CD4-positive, alpha-beta memory T cell (primary cell): ENCODE measurements at regions of chr6 and their contacts with region 1.

Region 1: DNA sequence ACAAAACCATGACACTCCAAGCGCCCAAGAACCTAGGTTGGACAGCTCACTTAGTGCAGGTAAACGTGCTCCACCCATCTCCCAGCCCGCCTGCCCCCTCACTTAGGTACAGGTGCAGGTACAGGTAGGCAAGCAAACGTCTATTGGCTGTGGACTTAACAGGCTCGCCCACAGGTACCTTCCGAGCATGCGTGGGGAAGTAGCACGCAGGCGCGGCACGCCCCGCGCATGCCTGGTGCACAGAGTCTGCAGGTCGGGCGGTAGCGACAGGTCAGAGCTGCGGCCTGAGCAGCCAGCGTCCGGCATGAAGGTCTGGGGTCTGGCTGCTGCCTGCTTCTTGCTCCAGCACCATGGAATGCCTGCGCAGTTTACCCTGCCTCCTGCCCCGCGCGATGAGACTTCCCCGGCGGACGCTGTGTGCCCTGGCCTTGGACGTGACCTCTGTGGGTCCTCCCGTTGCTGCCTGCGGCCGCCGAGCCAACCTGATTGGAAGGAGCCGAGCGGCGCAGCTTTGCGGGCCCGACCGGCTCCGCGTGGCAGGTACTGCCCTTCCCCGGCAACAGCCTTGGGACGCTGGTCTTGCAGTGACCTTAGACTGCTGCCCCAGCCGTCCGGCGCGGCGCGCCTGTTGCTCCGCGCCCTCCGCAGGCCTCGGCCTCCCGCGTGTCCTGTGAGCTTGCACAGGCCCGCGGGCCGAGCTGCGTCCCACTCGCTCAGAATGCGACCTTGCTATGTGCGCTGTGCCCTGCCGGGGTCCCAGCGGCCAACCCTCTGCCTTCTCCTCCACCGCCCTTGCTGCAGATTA is at the start of gene MRS2:
- DNase-seq: peak; percentile 73 to 78 (median 76)
- H3K4me3 ChIP-seq: peak within 1 kb of the TSS; percentile 77 to 87
- H3K4me3 Mint-ChIP-seq: peak within 1 kb of the TSS; percentile 90 to 97 (median 92)
- H3K27ac ChIP-seq: peak within 1 kb of the TSS; percentile 45
- H3K27ac Mint-ChIP-seq: peak within 1 kb of the TSS in 6 of 7 donors; percentile 67 to 93 (median 84)
- H3K4me1 ChIP-seq: peaks cover 14% of the 10 kb centered on the region
- H3K4me1 Mint-ChIP-seq: peaks cover 17 to 31% (median 23%) of the 10 kb centered on the region in 4 donors
- H3K27me3 ChIP-seq: no peaks in the 10 kb centered on the region
- H3K27me3 Mint-ChIP-seq: peaks cover 15 to 16% of the 10 kb centered on the region in 2 donors
- total RNA-seq, gene MRS2: 22.6 to 24.3 TPM

Region 2: DNA sequence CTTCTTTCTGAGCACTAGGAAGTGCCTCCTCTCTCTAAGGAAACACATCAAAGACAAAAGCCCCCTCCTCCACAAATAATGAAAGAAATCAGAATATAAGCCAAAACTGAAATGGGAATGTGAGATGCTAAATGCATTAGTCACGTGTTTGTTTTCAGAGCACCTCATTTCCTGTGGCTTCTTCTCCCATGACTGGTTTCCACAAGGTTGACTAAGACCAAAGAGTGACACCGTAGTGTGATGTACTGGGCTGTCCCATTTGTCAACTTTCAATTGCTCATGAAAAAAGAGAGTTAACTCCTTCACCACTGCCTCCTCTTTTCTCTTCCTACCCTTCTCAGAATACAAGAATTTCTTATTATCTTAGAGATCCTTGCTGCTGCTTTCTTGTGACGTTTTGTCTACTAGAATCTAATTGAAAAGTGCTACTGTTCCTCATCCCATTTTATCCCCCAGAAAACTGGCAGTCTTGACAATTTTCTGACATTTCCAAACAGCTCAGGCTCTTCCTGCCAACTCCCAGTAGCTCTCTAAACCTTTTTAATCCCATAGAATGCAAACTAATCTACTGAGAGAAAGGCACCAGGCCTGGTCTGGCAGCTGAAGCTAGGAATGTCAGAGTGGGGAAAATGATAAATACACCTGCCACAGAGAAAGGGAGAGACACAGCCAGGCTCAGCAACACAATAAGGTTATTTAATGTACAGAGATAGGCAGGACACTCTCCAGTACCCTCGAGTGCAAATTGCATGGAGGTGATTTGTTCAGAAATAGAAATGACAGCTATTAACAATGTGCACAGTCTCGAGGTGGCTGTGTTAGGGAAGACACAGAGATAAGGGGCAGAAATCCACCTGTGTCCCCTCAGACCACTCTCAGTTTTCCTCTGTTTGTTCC is 948.6 kb before region 1 on chr6:
- CTCF ChIA-PET with region 1: no interaction called
- POLR2A ChIA-PET with region 1: no interaction called
- intact Hi-C with region 1: no loop called
- DNase-seq: no peak
- H3K4me3 ChIP-seq: no peak overlapping the region
- H3K4me3 Mint-ChIP-seq: no peak overlapping the region
- H3K27ac ChIP-seq: no peak overlapping the region
- H3K27ac Mint-ChIP-seq: no peak overlapping the region
- H3K4me1 ChIP-seq: no peaks in the 10 kb centered on the region
- H3K4me1 Mint-ChIP-seq: no peaks in the 10 kb centered on the region
- H3K27me3 ChIP-seq: no peaks in the 10 kb centered on the region
- H3K27me3 Mint-ChIP-seq: no peaks in the 10 kb centered on the region

Region 3: DNA sequence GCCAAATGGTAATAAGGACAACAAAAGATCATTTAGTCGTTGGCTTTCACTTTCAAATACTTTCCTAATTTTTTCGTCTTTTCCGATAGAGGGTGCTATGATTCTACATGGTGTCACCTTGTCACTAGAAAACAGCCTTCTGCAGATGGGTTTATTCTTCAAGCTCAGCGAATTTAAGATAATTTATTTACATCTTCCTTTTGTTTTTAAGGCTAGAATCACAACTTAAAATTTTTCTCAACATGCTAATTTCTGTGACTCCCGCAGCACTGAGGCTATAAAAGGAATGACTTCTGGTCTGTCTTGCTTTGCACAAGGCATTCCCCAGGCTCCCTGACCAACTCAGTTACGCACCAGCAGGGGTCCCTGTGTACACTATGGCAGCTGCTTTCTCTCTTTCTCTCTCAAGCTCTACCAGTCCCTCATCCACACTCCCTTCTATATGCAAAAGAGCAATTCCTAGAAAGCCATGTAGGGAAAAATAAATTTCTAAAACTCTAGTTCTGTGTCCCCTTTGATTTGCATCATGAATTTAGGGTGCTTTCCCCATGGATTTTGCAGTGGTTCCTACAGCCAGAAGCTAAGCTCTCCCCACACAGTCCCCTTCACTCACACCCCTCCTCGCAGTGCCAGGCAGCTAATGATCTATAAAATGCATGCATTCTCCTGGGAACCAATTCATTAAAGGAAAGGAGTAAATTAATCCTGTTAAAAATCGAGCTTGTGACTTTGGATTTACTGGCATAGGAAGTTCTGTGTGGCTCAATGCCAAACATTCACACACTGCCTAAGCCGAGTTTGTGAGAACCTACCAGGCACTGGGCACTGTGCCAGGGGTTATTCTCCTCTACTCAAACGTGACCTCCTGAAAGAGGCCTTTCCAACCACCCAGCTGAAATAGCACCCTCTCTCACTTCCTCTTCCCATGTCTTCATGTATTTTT is 119.6 kb before region 1 on chr6:
- CTCF ChIA-PET with region 1: no interaction called
- POLR2A ChIA-PET with region 1: no interaction called
- intact Hi-C with region 1: loop called (anchors 5 kb)
- DNase-seq: peak in 4 of 5 donors; percentile 16 to 37 (median 27)
- H3K4me3 ChIP-seq: no peak overlapping the region
- H3K4me3 Mint-ChIP-seq: peak overlapping the region in 6 of 8 donors; percentile 18 to 55 (median 50)
- H3K27ac ChIP-seq: no peak overlapping the region
- H3K27ac Mint-ChIP-seq: no peak overlapping the region
- H3K4me1 ChIP-seq: peaks cover 7% of the 10 kb centered on the region
- H3K4me1 Mint-ChIP-seq: peaks cover 1 to 9% (median 4%) of the 10 kb centered on the region in 4 donors
- H3K27me3 ChIP-seq: no peaks in the 10 kb centered on the region
- H3K27me3 Mint-ChIP-seq: peaks cover 4 to 8% of the 10 kb centered on the region in 2 donors

Region 4: DNA sequence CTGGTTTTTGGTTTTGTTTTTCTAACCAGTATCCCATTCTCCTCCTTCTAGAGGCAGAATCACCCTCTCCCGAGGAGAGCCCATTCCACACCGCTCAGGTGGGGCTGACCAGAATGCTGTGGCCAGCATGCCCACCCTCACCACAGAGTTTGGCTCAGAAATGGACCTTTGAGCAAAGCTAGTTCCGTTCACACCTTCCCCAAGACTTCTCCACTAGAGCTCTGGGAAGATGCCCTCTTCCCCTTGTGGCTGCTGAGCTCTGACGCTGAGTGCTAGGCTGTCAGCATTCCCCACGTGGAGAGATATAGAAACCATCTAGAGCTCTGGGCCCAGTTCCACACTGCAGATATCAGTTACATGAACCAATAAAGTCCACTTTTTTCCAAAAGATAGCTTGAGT is 78.5 kb after region 1 on chr6:
- CTCF ChIA-PET with region 1: no interaction called
- POLR2A ChIA-PET with region 1: no interaction called
- intact Hi-C with region 1: no loop called
- DNase-seq: no peak
- H3K4me3 ChIP-seq: no peak overlapping the region
- H3K4me3 Mint-ChIP-seq: no peak overlapping the region
- H3K27ac ChIP-seq: no peak overlapping the region
- H3K27ac Mint-ChIP-seq: no peak overlapping the region
- H3K4me1 ChIP-seq: no peaks in the 10 kb centered on the region
- H3K4me1 Mint-ChIP-seq: no peaks in the 10 kb centered on the region
- H3K27me3 ChIP-seq: no peaks in the 10 kb centered on the region
- H3K27me3 Mint-ChIP-seq: no peaks in the 10 kb centered on the region